Right cardiac atrium (tissue), 5 donors: ENCODE measurements at regions of chr10 and their contacts with region 1.

Region 1: DNA sequence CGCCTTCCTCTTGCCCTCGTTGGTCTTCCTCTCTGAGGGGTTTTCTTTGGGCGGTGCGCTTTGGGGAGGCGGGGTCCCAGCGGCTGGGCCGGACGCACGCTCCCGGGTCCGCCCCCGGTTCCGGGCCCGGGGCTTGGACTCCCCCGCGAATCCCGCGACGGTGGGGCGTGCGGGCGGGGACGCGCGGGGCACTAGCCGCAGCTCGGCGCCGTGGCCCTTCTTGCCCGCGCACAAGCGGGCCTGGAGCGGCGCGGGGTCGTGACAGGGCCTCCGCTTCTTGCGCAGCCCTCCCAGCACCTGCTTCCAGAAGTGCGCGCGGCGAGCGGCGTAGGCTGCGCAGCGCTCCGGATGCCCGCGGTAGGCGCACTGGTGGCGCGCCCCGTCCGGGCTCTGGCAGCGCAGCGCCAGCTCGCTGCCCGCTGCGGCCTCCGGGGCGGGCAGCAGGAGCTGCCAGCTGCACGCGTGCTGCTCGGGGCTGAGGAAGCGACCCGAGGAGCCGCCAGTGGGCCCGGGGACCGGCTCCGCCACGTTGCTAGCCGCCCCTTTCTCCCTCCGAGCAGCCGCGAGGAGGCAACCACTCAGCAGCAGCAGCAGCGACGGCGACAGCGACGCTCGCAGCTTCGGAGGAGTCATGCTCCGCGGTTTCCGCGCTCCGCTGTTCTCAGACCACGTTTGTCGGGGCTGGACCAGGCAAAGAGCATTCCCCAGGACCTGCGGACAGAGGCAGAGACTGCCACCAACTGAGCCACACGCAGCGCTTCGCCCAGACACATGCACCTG is 759 bp downstream of the FGFBP3 start:
- DNase-seq: peak; percentile 83 to 90 (median 90)
- ATAC-seq: peak; percentile 96 to 97
- H3K4me3 ChIP-seq: peak overlapping the region; percentile 78
- H3K27ac ChIP-seq: peak overlapping the region; percentile 8
- H3K4me1 ChIP-seq: no peaks in the 10 kb centered on the region
- H3K27me3 ChIP-seq: no peaks in the 10 kb centered on the region

Region 2: GRCh38 chr10:91758303-91759146 is 150.0 kb before region 1 on chr10:
- intact Hi-C with region 1: loop called in 3 of 4 experiments (anchors 5 to 10 kb)
- DNase-seq: no peak
- ATAC-seq: peak in 1 of 2 donors; percentile 54
- H3K4me3 ChIP-seq: no peak overlapping the region
- H3K27ac ChIP-seq: no peak overlapping the region
- H3K4me1 ChIP-seq: no peaks in the 10 kb centered on the region
- H3K27me3 ChIP-seq: no peaks in the 10 kb centered on the region

Region 3: GRCh38 chr10:91768123-91768522 is 140.4 kb before region 1 on chr10:
- intact Hi-C with region 1: loop called in 1 of 4 experiments (anchors 10 kb)
- DNase-seq: no peak
- ATAC-seq: no peak
- H3K4me3 ChIP-seq: no peak overlapping the region
- H3K27ac ChIP-seq: no peak overlapping the region
- H3K4me1 ChIP-seq: no peaks in the 10 kb centered on the region
- H3K27me3 ChIP-seq: no peaks in the 10 kb centered on the region

Region 4: GRCh38 chr10:91974960-91975359 is 66.4 kb after region 1 on chr10:
- intact Hi-C with region 1: no loop called
- DNase-seq: no peak
- ATAC-seq: no peak
- H3K4me3 ChIP-seq: no peak overlapping the region
- H3K27ac ChIP-seq: no peak overlapping the region
- H3K4me1 ChIP-seq: peaks cover 5% of the 10 kb centered on the region
- H3K27me3 ChIP-seq: no peaks in the 10 kb centered on the region